H1 (cell line): ENCODE measurements at regions of chr13 and their contacts with region 1.

Region 1: DNA sequence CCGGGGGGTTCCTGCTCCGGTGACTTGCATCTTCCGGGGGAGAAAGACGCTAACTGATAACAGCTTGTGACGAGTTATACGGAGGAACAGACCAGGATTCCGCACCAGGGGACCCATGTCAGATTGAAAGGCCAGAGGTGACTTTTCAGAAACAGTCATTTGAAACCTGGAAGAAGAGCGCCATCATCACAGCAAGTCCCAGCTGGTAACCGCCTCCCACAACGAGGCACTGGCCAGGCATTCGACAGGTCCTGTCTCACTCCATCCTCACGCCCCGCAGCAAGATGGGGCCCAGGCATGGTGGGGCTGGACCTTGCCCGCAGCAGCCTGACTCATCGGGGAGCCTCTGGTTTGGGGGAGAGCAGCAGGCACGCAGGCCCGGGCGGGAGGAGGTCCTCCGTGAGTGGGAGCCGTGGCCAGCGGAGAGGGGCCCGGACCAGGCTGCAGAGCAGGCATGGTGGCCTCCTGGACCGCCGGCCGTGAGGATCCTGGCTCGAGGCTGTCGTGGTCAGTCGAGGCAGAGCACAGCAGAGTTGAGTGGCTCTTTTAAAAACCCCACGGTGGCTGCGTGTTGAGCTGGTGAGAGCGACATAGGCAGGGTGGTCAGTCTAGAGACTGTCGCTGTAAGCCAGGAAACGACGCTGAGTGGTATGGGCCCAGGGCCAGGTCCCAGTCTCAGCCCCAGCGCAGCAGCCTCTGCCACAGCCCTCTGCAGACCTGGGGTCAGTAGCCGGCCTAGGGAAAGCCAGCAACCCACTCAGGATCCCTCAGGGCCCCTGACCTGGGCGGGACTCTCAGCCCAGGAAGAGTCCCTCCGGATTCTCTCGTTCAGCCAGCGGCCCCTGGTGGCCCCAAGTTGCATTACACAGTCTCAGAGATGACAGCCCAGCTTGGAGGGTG is 94.9 kb upstream of the MCF2L start:
- DNase-seq: peak; percentile 33 to 97
- H3K4me3 ChIP-seq: no peak overlapping the region
- H3K27ac ChIP-seq: 0 out of 2 replicates have a peak overlapping the region, but pooled peaks have one; percentile 3
- H3K4me1 ChIP-seq: 0 out of 7 replicates have a peak, but pooled peaks cover 0 to 4% (median under 1%) of the 10 kb centered on the region in 4 experiments
- H3K27me3 ChIP-seq: no peaks in the 10 kb centered on the region
- CTCF ChIP-seq: peak in 2 of 3 experiments; percentile 88 to 94; a peak in 3 of 4 replicates
- EP300 ChIP-seq: no peak
- POLR2A ChIP-seq: no peak
- RAD21 ChIP-seq: peak; percentile 91 to 93

Region 2: GRCh38 chr13:112466132-112467058 is 407.7 kb before region 1 on chr13:
- CTCF ChIA-PET with region 1: no interaction called
- POLR2A ChIA-PET with region 1: no interaction called
- DNase-seq: peak in 1 of 2 experiments; percentile 39
- H3K4me3 ChIP-seq: no peak overlapping the region
- H3K27ac ChIP-seq: no peak overlapping the region
- H3K4me1 ChIP-seq: no peaks in the 10 kb centered on the region; a peak in 1 of 7 replicates
- H3K27me3 ChIP-seq: no peaks in the 10 kb centered on the region
- CTCF ChIP-seq: no peak
- EP300 ChIP-seq: no peak
- POLR2A ChIP-seq: no peak
- RAD21 ChIP-seq: no peak

Region 3: DNA sequence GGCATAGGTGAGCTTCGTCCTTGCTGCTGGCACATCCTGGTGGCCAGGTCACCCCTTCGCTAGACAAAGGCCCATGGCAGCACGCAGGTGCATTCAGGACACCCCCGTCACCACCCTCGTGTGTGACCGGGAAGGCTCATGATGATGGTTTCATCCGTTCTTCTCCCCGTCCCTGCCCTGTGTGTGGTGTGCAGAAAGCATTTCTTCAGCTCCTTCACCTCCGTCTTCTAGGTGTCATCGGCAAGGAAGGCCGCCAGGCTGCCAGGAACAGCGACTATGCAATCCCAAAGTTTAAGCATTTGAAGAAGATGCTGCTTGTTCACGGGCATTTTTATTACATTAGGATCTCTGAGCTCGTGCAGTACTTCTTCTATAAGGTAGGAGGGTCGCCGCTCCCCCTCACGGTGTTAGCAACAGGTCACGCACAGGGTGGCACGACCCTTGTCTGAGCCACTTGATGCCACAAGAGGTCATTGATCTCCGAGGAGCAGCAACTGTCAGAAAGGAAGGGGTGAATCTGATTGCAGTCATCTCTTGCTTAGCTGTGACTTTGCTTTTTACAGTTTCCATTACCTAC is 16.1 kb before region 1 on chr13:
- CTCF ChIA-PET with region 1: interaction called, 11 read pairs
- POLR2A ChIA-PET with region 1: no interaction called
- DNase-seq: no peak
- H3K4me3 ChIP-seq: no peak overlapping the region
- H3K27ac ChIP-seq: no peak overlapping the region
- H3K4me1 ChIP-seq: no peaks in the 10 kb centered on the region
- H3K27me3 ChIP-seq: no peaks in the 10 kb centered on the region
- CTCF ChIP-seq: no peak
- EP300 ChIP-seq: no peak
- POLR2A ChIP-seq: no peak
- RAD21 ChIP-seq: no peak

Region 4: DNA sequence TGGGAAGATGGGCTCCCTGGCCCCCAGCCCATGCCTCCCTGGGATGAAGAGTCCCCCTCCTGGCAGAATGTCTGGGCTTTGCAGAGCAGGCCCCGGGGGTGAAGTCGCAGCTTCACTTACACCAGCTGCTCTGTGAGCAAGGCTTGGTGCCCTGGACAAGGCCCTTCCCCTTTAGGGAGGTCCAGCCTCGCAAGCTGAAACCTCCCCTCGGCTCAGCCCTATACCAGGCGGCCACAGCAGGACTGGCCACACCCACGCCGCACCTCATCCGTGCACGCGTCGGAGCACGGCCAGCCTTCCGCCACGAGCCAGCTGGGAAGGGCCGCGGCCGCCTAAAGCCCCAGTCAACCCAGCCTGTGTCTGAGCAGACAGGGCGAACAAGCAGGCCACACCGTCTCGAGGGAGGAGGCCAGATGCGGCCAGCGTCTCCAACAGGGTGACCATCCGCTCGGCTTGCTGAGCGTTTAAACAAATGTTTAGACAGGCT is 11.7 kb after region 1 on chr13:
- CTCF ChIA-PET with region 1: interaction called, 31 read pairs
- POLR2A ChIA-PET with region 1: interaction called, 6 read pairs
- DNase-seq: peak; percentile 71 to 84
- H3K4me3 ChIP-seq: peak overlapping the region in 1 of 4 experiments; percentile 9; a peak in 1 of 8 replicates
- H3K27ac ChIP-seq: no peak overlapping the region
- H3K4me1 ChIP-seq: peaks cover 0 to 17% (median 9%) of the 10 kb centered on the region in 4 experiments; a peak in 6 of 7 replicates
- H3K27me3 ChIP-seq: peaks cover 0 to 10% (median 5%) of the 10 kb centered on the region in 4 experiments; a peak in 6 of 7 replicates
- CTCF ChIP-seq: 0 out of 4 replicates have a peak, but pooled peaks of 1 of the 3 experiments have one; percentile 1
- EP300 ChIP-seq: no peak
- POLR2A ChIP-seq: peak in 1 of 2 experiments; percentile 35; a peak in 1 of 3 replicates
- RAD21 ChIP-seq: no peak